ENCODE measurements at regions of chr14 and their contacts with region 1.

Region 1: DNA sequence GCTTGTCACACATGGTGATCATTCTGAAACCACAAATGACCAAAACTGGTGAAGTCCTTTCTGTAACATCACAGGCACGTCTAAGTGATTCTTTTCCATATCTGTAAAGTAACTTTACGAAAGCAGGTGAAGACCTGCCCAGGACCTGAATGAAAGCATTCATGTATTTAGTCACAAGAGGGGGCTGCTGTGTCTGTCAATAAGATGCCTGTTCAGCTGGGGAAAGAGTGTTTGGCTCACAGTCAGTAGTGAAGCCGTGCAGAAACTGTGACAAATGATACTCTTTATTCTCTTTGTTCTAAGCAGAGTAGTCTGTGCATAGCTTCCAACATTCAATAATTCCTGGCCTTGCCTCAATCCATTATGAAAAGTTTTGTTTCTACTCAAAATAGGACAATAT is 373.5 kb upstream of the OR4E1 start:
- DNase-seq: no peak
- ATAC-seq: no peak
- H3K4me3 Mint-ChIP-seq: no peak overlapping the region
- H3K27ac Mint-ChIP-seq: no peak overlapping the region
- H3K4me1 Mint-ChIP-seq: peaks cover 3% of the 10 kb centered on the region
- H3K27me3 Mint-ChIP-seq: peaks cover 47% of the 10 kb centered on the region
- CTCF ChIP-seq: no peak

Region 2: GRCh38 chr14:22070119-22071011 is 23.2 kb after region 1 on chr14:
- CTCF ChIA-PET with region 1: no interaction called
- POLR2A ChIA-PET with region 1: no interaction called
- intact Hi-C with region 1: loop called (anchors 1 kb)
- DNase-seq: peak; percentile 16
- ATAC-seq: peak; percentile 26
- H3K4me3 Mint-ChIP-seq: peak overlapping the region; percentile 55
- H3K27ac Mint-ChIP-seq: no peak overlapping the region
- H3K4me1 Mint-ChIP-seq: peaks cover 23% of the 10 kb centered on the region
- H3K27me3 Mint-ChIP-seq: peaks cover 52% of the 10 kb centered on the region
- CTCF ChIP-seq: no peak

Region 3: DNA sequence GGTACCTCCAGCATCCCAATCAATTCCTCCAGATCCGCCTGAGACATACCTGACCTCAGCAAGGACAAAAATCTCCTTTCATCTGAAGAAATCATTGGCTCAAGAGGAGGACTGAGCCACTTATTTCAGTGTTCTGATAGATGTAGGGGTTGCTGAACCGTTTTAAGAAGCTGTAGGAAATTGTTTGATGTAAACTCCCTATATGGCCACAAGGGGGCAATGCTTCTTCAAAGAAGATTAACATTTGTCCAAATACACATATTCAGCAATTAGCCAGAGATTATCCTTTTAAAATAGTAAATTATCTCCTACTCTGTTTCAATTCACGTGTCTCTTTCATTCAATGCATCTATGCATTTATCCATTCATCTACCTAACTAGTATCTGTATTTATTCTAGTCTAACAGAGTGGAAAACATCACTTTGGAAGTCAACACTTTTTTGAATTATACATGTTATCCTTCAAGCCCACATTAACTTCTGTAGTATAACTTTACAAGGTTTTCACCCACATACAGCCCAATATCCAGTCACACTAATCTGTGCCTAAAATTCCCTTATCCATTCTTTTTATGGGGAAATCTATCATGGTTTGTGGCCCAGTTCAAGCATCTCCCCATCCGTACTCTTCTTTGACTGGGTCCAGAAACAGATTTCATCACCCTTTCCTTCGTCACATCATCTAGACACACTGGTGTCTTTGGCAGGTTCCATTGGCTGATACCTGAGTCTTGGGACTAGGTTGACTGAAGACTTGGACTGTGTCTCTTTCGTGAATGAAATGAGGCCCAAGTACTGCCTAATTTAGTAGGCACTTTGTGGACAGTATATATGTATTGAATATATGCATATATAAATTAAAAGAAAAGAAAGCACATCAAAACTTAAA is 37.5 kb after region 1 on chr14:
- CTCF ChIA-PET with region 1: no interaction called
- POLR2A ChIA-PET with region 1: no interaction called
- intact Hi-C with region 1: loop called (anchors 5 kb)
- DNase-seq: no peak
- ATAC-seq: peak; percentile 34
- H3K4me3 Mint-ChIP-seq: no peak overlapping the region
- H3K27ac Mint-ChIP-seq: no peak overlapping the region
- H3K4me1 Mint-ChIP-seq: no peaks in the 10 kb centered on the region
- H3K27me3 Mint-ChIP-seq: peaks cover 46% of the 10 kb centered on the region
- CTCF ChIP-seq: peak; percentile 18

Region 4: DNA sequence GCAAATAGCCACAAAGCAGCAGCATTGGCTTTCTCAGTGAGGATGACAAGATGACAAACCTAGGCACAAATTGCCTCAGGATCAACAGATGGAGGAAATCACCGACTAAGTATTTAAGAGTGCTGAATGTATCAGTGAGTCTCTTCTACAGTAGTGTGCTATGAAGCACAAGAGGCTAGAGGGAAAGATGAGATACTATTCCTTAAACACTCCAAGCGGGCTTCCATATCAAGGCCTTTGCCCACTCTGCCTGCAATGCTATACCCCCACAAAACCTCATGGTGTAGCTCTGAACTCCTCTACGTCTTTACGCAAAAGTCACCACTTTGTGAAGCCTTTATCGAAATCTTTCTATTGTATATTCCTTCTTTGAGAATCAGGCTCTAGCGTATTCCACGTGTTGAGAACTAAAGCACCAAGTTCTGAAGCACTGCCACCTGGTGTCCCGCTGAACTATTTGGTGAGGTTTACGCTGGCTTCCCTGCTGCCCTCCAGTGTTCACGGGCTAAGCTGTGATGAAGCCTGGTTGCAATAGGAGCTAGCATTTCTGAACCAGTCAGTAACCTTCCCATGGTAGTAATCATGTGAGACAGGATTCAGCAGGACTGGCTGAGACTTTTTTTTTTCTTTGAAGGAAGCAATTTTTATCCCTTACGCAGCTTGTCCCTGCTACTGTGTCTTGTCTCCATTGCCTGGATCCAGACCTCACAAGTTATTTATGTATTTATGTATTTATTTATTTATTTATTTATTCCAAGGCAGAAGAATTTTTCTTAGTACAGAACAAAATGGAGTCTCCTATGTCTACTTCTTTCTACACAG is 53.0 kb after region 1 on chr14:
- CTCF ChIA-PET with region 1: no interaction called
- POLR2A ChIA-PET with region 1: no interaction called
- intact Hi-C with region 1: loop called (anchors 1 kb)
- DNase-seq: no peak
- ATAC-seq: peak; percentile 49
- H3K4me3 Mint-ChIP-seq: no peak overlapping the region
- H3K27ac Mint-ChIP-seq: no peak overlapping the region
- H3K4me1 Mint-ChIP-seq: no peaks in the 10 kb centered on the region
- H3K27me3 Mint-ChIP-seq: peaks cover 43% of the 10 kb centered on the region
- CTCF ChIP-seq: no peak

Region 5: DNA sequence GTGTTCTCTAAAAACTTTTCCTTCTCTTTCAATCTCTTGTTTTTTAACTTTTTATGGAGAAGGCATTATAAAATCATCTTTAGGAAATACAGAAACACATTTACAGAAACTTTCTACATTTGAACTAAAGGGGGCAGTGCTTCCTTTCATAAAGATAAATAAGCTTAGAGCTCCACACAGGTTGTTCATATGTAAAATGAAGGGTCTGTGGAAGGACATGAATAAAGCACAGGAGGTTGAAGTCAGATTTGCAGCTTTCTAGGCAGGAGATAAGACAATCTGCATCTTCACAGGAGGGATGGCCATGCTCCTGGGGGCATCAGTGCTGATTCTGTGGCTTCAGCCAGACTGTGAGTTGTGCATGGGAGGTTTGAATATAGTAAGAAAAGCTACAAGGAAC is 115.9 kb after region 1 on chr14:
- CTCF ChIA-PET with region 1: no interaction called
- POLR2A ChIA-PET with region 1: no interaction called
- intact Hi-C with region 1: no loop called
- DNase-seq: no peak
- ATAC-seq: no peak
- H3K4me3 Mint-ChIP-seq: no peak overlapping the region
- H3K27ac Mint-ChIP-seq: no peak overlapping the region
- H3K4me1 Mint-ChIP-seq: no peaks in the 10 kb centered on the region
- H3K27me3 Mint-ChIP-seq: peaks cover 20% of the 10 kb centered on the region
- CTCF ChIP-seq: no peak